Heart left ventricle (tissue), 16 donors: ENCODE measurements at regions of chr3 and their contacts with region 1.

Region 1: DNA sequence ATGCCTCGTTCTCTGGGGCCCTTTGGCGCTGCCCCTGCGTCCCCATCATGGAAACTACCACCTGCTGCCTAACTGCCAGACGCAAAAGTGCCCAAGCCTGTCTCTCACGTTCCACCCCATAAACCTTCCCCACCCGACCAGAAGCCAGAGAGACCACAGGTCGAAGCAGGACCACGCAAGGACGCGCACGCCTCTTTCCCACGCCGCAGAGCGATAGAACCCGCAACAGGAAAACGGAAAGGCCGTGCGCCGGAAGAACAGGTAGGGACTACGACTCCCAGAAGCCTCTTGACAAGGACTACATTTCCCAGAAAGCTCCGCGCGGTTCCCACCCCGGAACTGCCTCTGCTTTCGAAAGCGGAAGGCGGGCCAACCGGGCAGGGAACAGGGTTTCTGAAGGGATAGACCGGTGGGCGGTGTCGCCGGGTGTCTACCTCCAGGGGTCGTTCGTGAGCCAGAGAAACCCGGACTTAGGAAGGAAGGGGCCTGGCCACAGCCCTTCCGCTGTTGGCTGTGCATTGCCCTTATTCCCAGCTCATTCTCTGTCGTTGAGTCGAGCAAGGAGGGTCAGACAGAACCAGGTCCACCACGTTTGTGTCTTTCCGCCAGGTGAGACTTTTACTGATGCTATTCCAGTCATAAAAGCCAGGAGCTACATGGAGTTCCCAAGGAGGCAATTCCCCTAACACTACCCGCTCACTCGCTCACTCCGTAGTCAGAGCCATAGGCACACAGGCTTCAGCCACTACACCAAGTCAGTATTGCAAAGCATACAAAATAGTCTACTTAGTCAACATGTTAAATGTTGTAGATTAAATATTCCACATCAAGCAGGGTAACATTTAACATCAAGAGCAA is 56.6 kb upstream of the ZBTB38 start:
- DNase-seq: peak; percentile 98 to 99 (median 99)
- ATAC-seq: peak; percentile 97 to 99 (median 98)
- H3K4me3 ChIP-seq: peak overlapping the region; percentile 28 to 85 (median 70)
- H3K27ac ChIP-seq: peak overlapping the region; percentile 1 to 90 (median 80)
- H3K4me1 ChIP-seq: peaks cover 0 to 29% (median 11%) of the 10 kb centered on the region in 12 donors
- H3K27me3 ChIP-seq: no peaks in the 10 kb centered on the region
- CTCF ChIP-seq: peak; percentile 69 to 92 (median 84)
- POLR2A ChIP-seq: peak in 1 of 2 donors; percentile 74

Region 2: GRCh38 chr3:141151439-141151838 is 160.3 kb before region 1 on chr3:
- intact Hi-C with region 1: no loop called
- DNase-seq: peak in 2 of 5 donors; percentile 38 to 42
- ATAC-seq: peak in 3 of 4 donors; percentile 61 to 80 (median 78)
- H3K4me3 ChIP-seq: no peak overlapping the region
- H3K27ac ChIP-seq: no peak overlapping the region
- H3K4me1 ChIP-seq: peaks cover 0 to 12% (median 0%) of the 10 kb centered on the region in 12 donors
- H3K27me3 ChIP-seq: no peaks in the 10 kb centered on the region
- CTCF ChIP-seq: no peak
- POLR2A ChIP-seq: no peak

Region 3: GRCh38 chr3:141353652-141354495 is 42.1 kb after region 1 on chr3:
- intact Hi-C with region 1: loop called in 4 of 10 experiments (anchors 2 to 5 kb)
- DNase-seq: no peak
- ATAC-seq: peak in 3 of 4 donors; percentile 52 to 88 (median 69)
- H3K4me3 ChIP-seq: no peak overlapping the region
- H3K27ac ChIP-seq: no peak overlapping the region
- H3K4me1 ChIP-seq: no peaks in the 10 kb centered on the region
- H3K27me3 ChIP-seq: no peaks in the 10 kb centered on the region
- CTCF ChIP-seq: no peak
- POLR2A ChIP-seq: no peak

Region 4: GRCh38 chr3:141360888-141361598 is 49.3 kb after region 1 on chr3:
- intact Hi-C with region 1: loop called in 6 of 10 experiments (anchors 2 to 5 kb)
- DNase-seq: peak in 1 of 5 donors; percentile 23
- ATAC-seq: peak; percentile 72 to 88 (median 82)
- H3K4me3 ChIP-seq: peak overlapping the region in 6 of 12 donors; percentile 6 to 33 (median 26)
- H3K27ac ChIP-seq: peak overlapping the region in 10 of 12 donors; percentile 10 to 60 (median 44)
- H3K4me1 ChIP-seq: peaks cover 0 to 12% (median 4%) of the 10 kb centered on the region in 12 donors
- H3K27me3 ChIP-seq: no peaks in the 10 kb centered on the region
- CTCF ChIP-seq: peak; percentile 63 to 92 (median 84)
- POLR2A ChIP-seq: no peak

Region 5: GRCh38 chr3:141368062-141368924 is 56.6 kb after region 1 on chr3 and contains the start of gene ZBTB38:
- intact Hi-C with region 1: loop called in 4 of 10 experiments (anchors 1 to 5 kb)
- DNase-seq: peak; percentile 91 to 98 (median 93)
- ATAC-seq: peak; percentile 92 to 96 (median 95)
- H3K4me3 ChIP-seq: peak within 1 kb of the TSS; percentile 3 to 54 (median 44)
- H3K27ac ChIP-seq: peak within 1 kb of the TSS; percentile 87 to 97 (median 94)
- H3K4me1 ChIP-seq: peaks cover 12 to 64% (median 42%) of the 10 kb centered on the region in 12 donors
- H3K27me3 ChIP-seq: no peaks in the 10 kb centered on the region
- CTCF ChIP-seq: no peak
- POLR2A ChIP-seq: peak in 1 of 2 donors; percentile 88
- total RNA-seq, gene ZBTB38: 97.5 to 189 (median 128) TPM

Region 6: GRCh38 chr3:141553055-141553454 is 241.3 kb after region 1 on chr3:
- intact Hi-C with region 1: loop called in 1 of 10 experiments (anchors 10 kb)
- DNase-seq: no peak
- ATAC-seq: peak in 2 of 4 donors; percentile 34 to 51
- H3K4me3 ChIP-seq: no peak overlapping the region
- H3K27ac ChIP-seq: peak overlapping the region in 1 of 12 donors; percentile 53
- H3K4me1 ChIP-seq: peaks cover 0 to 42% (median 1%) of the 10 kb centered on the region in 12 donors
- H3K27me3 ChIP-seq: no peaks in the 10 kb centered on the region
- CTCF ChIP-seq: no peak
- POLR2A ChIP-seq: no peak

Region 7: DNA sequence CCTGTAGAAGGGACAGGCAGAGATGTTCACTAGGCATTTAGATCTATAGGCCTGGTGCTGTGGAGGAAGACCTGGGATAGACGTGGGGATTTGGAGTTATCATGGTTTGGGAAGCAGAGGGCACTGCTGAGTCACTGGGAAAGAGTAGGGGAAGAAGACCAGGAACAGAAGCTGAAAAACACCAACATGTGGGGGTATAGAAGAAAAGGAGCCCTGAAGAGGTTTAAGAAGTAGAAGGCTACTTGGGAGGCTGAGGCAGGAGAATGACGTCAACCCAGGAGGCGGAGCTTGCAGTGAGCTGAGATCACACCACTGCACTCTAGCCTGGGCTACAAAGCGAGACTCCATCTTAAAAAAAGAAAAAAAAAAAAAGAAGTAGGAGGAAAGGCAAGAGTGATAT is 470.7 kb after region 1 on chr3:
- intact Hi-C with region 1: no loop called
- DNase-seq: no peak
- ATAC-seq: no peak
- H3K4me3 ChIP-seq: no peak overlapping the region
- H3K27ac ChIP-seq: no peak overlapping the region
- H3K4me1 ChIP-seq: no peaks in the 10 kb centered on the region
- H3K27me3 ChIP-seq: no peaks in the 10 kb centered on the region
- CTCF ChIP-seq: peak in 5 of 12 donors; percentile 18 to 45 (median 30)
- POLR2A ChIP-seq: no peak